ENCODE measurements at regions of chr20 and their contacts with region 1.

Region 1: GRCh38 chr20:5608442-5609161 is 141.6 kb upstream of the SHLD1 start:
- DNase-seq: peak in 1 of 2 experiments; percentile 52
- H3K4me3 ChIP-seq: peak overlapping the region; percentile 97; the same call in 1 of the 2 replicates
- H3K27ac ChIP-seq: peak overlapping the region; percentile 64
- H3K4me1 ChIP-seq: peaks cover 29% of the 10 kb centered on the region
- H3K27me3 ChIP-seq: no peaks in the 10 kb centered on the region
- CTCF ChIP-seq: no peak

Region 2: GRCh38 chr20:5569021-5569420 is 39.6 kb before region 1 on chr20:
- CTCF ChIA-PET with region 1: no interaction called
- POLR2A ChIA-PET with region 1: no interaction called
- intact Hi-C with region 1: loop called (anchors 1 kb)
- DNase-seq: peak; percentile 31 to 42
- H3K4me3 ChIP-seq: no peak overlapping the region
- H3K27ac ChIP-seq: no peak overlapping the region
- H3K4me1 ChIP-seq: no peaks in the 10 kb centered on the region
- H3K27me3 ChIP-seq: no peaks in the 10 kb centered on the region
- CTCF ChIP-seq: peak; percentile 81

Region 3: DNA sequence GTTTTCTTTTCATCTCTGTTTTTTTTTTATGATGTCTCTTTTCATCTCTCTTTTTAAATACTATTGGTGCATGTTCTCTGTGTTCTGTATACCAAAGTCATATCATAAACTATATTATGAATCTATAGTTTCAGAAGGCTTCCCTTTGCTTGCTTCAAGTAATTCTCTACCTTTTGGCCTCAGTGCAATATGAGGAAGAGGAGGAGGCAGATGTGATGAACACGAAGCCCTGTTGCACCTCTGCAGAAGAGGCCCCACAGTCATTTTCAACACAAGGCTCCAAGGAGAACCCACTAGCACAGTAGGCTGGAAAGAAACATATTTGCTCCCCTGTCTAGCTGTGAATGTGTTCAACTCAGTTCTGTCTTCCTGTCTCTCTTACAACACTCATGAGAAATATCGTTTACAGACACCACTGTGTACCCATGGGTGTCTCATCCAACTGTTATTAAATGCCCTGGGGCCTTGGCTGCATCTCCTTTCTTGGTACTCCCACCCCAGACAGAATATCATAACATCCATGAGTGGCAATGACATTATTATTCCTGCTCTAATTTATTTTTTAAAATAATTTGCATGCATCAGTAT is 19.0 kb after region 1 on chr20:
- CTCF ChIA-PET with region 1: no interaction called
- POLR2A ChIA-PET with region 1: no interaction called
- intact Hi-C with region 1: loop called (anchors 1 kb)
- DNase-seq: no peak
- H3K4me3 ChIP-seq: no peak overlapping the region
- H3K27ac ChIP-seq: no peak overlapping the region
- H3K4me1 ChIP-seq: peaks cover 13% of the 10 kb centered on the region
- H3K27me3 ChIP-seq: no peaks in the 10 kb centered on the region
- CTCF ChIP-seq: no peak

Measured in PC-9 (cell line).